Activated CD4-positive, alpha-beta memory T cell treated with anti-CD3 and anti-CD28 coated beads for 36 hours (primary cell): ENCODE measurements at regions of chr17 and their contacts with region 1.

Region 1: GRCh38 chr17:8057691-8058114 is 18.8 kb downstream of the ALOX15B start:
- DNase-seq: peak; percentile 46
- H3K4me3 Mint-ChIP-seq: no peak overlapping the region
- H3K27ac Mint-ChIP-seq: no peak overlapping the region
- H3K4me1 Mint-ChIP-seq: peaks cover 12% of the 10 kb centered on the region
- H3K27me3 Mint-ChIP-seq: peaks cover 42% of the 10 kb centered on the region

Region 2: DNA sequence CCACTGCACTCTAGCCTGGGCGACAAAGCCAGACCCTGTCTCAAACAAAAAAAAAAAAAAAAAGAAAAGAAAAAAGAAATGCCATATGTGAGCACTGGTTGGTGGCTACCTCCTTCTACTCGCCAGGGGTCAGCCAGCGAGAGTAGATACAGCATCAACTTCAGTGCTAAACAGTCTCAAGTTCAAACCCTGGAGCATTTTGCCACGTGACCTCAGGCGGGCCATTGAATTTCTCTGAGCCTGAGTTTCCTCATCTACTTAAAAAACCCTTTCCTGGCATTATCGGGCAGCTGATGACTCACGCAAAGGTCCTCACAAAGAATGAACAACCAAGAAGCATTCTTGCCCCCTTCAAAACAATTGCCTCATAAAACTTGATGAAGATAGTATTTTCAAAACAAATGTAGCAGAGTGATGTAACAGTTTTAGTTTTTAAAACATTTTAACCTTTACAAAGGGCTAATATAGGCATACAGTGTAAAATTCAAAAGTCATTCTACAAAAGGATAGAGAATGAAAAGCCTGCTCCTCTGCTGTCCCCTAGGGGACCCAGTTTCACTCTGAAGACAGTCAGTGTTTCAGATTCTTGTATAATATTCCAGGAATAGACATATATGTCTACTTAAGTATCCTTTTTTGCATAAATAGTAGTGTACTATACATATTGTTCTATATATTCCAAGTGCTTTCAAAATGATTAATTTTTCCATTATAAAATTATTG is 311.8 kb before region 1 on chr17:
- CTCF ChIA-PET with region 1: interaction called, 22 read pairs
- POLR2A ChIA-PET with region 1: no interaction called
- intact Hi-C with region 1: loop called (anchors 5 kb)
- DNase-seq: no peak
- H3K4me3 Mint-ChIP-seq: no peak overlapping the region
- H3K27ac Mint-ChIP-seq: no peak overlapping the region
- H3K4me1 Mint-ChIP-seq: no peaks in the 10 kb centered on the region
- H3K27me3 Mint-ChIP-seq: peaks cover 3% of the 10 kb centered on the region

Region 3: DNA sequence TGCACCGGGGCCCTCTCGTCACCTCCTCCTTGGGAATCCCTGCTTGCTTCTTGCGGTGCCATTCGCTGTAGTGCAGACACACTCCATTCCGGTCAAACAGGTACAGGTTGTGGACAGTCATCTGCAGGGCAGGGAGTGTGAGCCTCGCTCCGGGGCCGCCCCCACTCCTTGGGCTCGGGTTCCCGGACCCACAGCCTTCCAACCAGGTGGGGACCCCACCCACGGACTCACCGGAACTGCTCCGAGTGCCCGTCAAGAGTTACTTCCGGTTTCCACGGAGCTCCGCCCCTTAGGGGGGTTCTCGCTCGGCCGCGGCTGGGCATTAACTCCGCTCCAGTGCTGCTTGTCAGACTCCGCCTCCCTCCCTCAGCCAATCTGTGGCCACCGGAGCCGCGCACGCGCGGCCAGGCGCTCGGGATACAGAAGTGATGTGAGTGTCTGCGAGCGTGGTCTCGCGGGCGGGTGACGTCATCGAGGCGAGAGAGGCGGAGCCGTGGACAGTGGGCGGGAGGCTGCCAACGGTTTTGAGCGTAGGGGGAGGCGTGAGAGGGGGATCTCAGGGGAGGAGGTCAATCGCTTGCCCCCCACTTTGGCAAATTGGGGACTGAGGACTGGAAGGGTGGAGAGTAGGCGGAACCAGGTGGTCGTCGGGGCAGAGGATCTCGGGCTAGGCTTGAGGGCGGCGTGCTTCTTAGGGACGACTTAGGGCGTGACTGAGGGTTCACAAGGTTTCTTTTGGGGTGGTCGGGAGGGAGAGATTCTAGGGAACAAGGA is 125.8 kb before region 1 on chr17 and contains the starts of genes CNTROB and TRAPPC1:
- CTCF ChIA-PET with region 1: interaction called, 11 read pairs
- POLR2A ChIA-PET with region 1: no interaction called
- intact Hi-C with region 1: no loop called
- DNase-seq: peak; percentile 100
- H3K4me3 Mint-ChIP-seq: peak within 1 kb of the TSS; percentile 93
- H3K27ac Mint-ChIP-seq: peak within 1 kb of the TSS; percentile 88
- H3K4me1 Mint-ChIP-seq: peaks cover 47% of the 10 kb centered on the region
- H3K27me3 Mint-ChIP-seq: no peaks in the 10 kb centered on the region
- total RNA-seq, gene CNTROB: 45.9 to 50.1 TPM
- total RNA-seq, gene TRAPPC1: 197 to 201 TPM

Region 4: DNA sequence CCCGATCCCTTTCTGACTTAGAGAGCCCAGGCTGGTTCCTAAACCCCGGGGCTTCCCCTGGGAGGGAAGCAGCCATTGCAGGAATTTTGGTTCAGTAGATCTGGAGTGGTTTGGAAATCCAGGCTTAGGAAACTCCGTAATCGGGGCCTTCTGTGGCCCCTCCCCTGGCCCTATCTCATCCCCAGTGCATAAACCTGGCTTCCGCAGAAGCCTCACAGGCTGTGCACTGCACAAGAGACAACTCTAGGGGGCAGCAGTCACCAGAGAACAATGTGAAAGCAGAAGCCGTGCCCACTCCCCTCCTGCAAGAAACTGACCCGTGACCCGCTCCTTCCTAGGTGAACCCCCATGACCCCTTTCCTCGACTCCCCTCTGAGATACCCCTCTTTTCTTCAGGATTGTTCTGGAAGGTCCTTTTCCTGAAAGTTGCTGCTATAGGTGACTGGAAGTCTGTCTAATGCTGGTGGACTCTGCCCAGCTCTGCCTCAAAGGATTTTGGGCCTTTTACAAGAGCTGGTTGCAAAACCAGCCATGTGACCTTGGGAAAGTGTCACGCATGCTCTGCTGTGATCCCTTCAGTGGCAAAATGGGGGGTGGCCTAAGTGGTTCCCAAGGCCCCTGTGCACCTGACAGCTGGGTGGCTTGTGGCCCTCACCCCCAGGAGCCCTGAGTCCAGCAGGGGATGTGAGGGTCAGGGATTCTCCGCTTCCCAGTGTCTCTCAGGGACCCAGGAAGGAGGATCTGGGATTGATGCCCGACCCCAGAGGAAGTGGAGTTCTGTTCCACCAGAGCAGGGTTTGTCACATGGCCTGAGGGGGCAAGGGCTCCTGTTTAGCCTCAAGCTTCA is 40.8 kb before region 1 on chr17:
- CTCF ChIA-PET with region 1: interaction called, 24 read pairs
- POLR2A ChIA-PET with region 1: no interaction called
- intact Hi-C with region 1: loop called (anchors 2 kb)
- DNase-seq: peak; percentile 76
- H3K4me3 Mint-ChIP-seq: peak overlapping the region; percentile 62
- H3K27ac Mint-ChIP-seq: no peak overlapping the region
- H3K4me1 Mint-ChIP-seq: peaks cover 12% of the 10 kb centered on the region
- H3K27me3 Mint-ChIP-seq: peaks cover 8% of the 10 kb centered on the region

Region 5: DNA sequence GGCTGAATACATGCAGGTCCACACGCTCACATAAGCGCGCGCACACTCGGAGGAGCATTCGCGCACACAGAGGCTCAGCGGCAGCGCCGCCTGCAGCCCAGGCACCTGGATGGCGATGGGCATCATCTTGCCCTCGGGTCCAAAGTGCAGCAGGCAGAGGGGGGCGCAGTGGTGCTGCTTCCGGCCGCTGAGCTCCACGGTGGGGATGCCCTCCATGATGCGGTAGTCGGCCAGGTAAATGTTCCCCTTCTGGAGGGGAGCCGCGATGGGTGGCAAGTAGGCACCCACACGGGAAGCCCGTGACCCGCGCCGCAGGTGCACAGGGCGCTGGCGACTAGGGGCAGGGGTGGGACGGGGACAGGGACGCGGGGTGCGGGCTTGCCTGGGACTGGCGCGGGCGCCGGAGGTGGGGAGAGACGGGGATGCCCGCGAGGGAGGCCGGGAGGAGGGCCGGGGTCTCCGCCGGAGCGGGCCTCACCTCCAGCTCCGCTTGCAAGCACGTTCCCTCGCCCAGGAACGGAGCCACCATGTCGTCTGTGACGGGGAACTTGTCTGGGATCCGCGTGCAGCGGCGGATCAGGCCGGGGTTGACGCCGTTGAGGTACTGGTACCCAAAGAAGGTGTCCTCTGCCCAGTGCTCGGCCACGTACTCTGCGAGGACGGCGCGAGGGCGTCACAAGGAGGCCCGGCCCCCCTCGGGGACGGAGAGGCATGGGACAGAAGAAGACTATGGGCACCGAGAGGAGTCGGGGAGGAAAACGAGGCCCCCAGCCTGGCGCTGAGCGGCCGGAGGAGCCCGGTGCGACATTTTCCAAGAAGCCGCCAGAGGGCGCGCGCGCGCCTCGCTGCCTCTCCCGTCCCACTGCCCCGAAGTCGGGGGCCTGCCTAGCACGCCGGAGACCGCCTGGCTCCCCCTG is 21.8 kb after region 1 on chr17:
- CTCF ChIA-PET with region 1: interaction called, 298 read pairs
- POLR2A ChIA-PET with region 1: no interaction called
- intact Hi-C with region 1: loop called (anchors 2 kb)
- DNase-seq: peak; percentile 89
- H3K4me3 Mint-ChIP-seq: peak overlapping the region; percentile 93
- H3K27ac Mint-ChIP-seq: peak overlapping the region; percentile 81
- H3K4me1 Mint-ChIP-seq: peaks cover 13% of the 10 kb centered on the region
- H3K27me3 Mint-ChIP-seq: peaks cover 10% of the 10 kb centered on the region

Region 6: DNA sequence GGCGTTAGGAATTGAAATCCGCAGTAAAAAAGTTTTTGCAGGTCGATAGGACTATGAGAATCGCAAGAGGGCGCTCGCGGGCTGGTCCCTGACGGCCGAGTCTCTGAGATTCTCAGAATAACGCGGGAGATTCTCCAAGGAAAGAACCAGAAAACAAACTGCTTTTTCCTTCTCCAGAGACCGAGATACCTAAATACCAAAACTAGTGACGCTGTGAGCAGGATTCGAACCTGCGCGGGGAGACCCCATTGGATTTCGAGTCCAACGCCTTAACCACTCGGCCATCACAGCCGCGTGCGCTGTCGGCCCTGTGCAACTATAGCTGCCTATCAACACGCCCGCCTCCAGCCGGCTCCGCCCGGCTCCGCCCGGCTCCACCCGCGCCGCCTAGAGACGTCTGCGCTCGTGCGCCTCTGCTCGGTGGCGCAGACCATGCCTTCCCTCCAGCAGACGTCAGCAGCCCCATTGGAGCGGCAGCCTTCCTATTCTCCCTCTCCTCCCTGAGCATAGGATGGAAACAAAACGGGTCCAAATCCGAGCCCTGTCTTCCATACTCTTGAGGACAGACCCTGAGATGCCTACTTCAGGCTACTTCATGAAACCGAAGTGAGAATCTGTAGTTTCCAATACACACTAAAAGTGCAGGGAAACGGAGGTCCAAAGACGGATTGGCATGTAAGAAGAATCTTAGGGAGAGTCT is 81.1 kb after region 1 on chr17:
- CTCF ChIA-PET with region 1: interaction called, 10 read pairs
- POLR2A ChIA-PET with region 1: no interaction called
- intact Hi-C with region 1: no loop called
- DNase-seq: peak; percentile 98
- H3K4me3 Mint-ChIP-seq: no peak overlapping the region
- H3K27ac Mint-ChIP-seq: no peak overlapping the region
- H3K4me1 Mint-ChIP-seq: peaks cover 2% of the 10 kb centered on the region
- H3K27me3 Mint-ChIP-seq: peaks cover 1% of the 10 kb centered on the region

Region 7: GRCh38 chr17:8151123-8151640 is 93.5 kb after region 1 on chr17:
- CTCF ChIA-PET with region 1: no interaction called
- POLR2A ChIA-PET with region 1: no interaction called
- intact Hi-C with region 1: no loop called
- DNase-seq: peak; percentile 92
- H3K4me3 Mint-ChIP-seq: peak overlapping the region; percentile 83
- H3K27ac Mint-ChIP-seq: no peak overlapping the region
- H3K4me1 Mint-ChIP-seq: peaks cover 35% of the 10 kb centered on the region
- H3K27me3 Mint-ChIP-seq: no peaks in the 10 kb centered on the region